Activated B cell treated with CpG ODN at 0.5 μM for 24 hours (primary cell): ENCODE measurements at regions of chr17 and their contacts with region 1.

Region 1: DNA sequence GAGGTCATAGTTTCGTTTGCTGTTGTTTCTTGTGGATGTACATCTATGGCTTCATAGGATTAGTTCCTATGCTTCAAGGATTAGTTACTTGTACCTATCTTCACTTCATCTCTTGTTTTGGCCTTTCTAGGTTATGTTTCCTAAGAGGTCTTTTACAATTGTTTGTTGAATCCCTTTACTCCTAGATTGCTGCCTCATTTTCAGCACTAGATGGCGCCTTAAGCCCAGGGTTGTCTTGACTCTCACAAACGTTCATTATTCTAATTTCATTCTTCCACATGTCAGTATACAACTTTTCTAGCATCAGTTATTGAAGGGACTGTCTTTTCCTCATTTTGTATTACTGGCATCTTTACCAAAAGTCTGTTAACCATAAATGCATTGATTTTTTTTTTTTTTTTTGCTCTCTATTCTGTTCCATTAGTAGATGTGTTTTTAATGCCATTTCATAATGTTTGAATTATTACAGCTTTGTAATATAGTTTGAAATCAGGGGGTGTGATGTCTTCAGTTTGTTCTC is 45.0 kb upstream of the NACA2 start:
- DNase-seq: no peak
- ATAC-seq: no peak
- H3K4me3 Mint-ChIP-seq: no peak overlapping the region
- H3K27ac Mint-ChIP-seq: no peak overlapping the region
- H3K4me1 Mint-ChIP-seq: peaks cover 10% of the 10 kb centered on the region
- H3K27me3 Mint-ChIP-seq: peaks cover 34% of the 10 kb centered on the region
- CTCF ChIP-seq: peak; percentile 70

Region 2: GRCh38 chr17:61843435-61843834 is 207.5 kb after region 1 on chr17:
- CTCF ChIA-PET with region 1: interaction called, 10 read pairs
- POLR2A ChIA-PET with region 1: no interaction called
- intact Hi-C with region 1: no loop called
- DNase-seq: no peak
- ATAC-seq: no peak
- H3K4me3 Mint-ChIP-seq: no peak overlapping the region
- H3K27ac Mint-ChIP-seq: no peak overlapping the region
- H3K4me1 Mint-ChIP-seq: no peaks in the 10 kb centered on the region
- H3K27me3 Mint-ChIP-seq: no peaks in the 10 kb centered on the region
- CTCF ChIP-seq: no peak